ENCODE measurements at regions of chr15 and their contacts with region 1.

Region 1: DNA sequence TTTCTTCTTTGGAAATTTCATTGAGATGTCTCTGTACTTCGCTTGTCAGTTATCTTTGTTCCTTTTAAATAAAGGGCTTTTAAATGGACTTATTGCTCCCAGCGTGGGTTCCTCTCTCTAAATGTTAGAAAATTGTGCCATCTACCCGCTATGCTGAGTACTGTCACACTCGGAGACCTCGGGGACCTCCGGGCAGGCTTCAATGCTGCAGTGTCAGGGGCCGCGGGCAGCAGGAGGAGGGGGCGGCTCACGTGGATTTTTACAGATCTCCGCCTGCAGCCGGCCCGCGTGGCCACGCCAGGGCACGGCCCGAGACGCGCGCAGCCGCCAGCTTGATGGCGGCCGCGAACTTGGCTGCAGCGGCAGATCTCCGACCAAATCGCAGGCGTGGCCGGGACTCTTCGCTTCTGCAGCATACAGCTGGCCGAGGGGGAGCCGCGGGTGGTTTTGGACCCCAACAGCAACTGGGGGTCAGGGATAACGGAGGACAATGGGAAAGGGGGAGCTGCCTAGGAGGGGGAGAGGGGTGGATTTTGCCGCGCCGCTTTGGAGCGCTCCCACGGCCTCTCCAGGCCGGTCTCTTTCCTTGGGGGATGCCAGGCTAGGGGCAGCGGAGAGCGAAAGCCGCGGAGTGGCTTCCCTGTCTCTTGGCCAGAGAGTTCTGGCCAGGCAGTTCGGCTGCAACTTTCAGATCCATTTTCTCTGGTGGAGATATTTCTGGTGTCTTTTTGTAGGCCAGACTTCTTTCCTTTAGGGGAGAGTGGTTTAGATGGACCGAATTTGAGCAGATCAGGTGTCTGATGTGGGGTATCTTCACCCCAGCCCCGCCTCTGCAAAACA is 15.3 kb downstream of the NR2F2 start:
- DNase-seq: no peak
- H3K4me3 ChIP-seq: peak overlapping the region; percentile 30 to 47 (median 33)
- H3K27ac ChIP-seq: no peak overlapping the region
- H3K4me1 ChIP-seq: no peaks in the 10 kb centered on the region
- H3K27me3 ChIP-seq: no peaks in the 10 kb centered on the region
- CTCF ChIP-seq: peak; percentile 48 to 66

Region 2: DNA sequence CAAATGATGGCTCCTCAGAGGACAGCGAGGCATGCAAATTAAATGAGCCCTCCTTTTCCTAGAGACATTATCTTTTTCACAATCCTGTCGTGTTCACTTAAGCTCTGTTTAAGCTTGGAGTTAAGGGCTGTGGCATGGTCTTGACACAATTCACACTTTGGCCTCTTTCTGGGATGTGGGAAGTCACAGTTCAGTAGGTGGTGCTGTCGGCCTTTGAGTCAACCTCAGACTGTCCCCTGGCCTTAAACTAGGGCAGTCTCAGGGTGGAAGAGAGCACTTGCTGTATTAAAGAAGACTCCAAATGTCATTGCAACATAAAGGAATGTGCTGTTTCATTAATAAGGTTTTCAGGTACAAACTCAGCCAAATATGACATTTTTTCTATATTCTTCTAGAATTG is 1763.4 kb before region 1 on chr15:
- CTCF ChIA-PET with region 1: no interaction called
- dilution Hi-C with region 1: no loop called
- in situ Hi-C with region 1: no loop called
- intact Hi-C with region 1: loop called (anchors 5 kb)
- DNase-seq: peak; percentile 6
- H3K4me3 ChIP-seq: no peak overlapping the region
- H3K27ac ChIP-seq: no peak overlapping the region
- H3K4me1 ChIP-seq: no peaks in the 10 kb centered on the region
- H3K27me3 ChIP-seq: peaks cover 3% of the 10 kb centered on the region
- CTCF ChIP-seq: peak; percentile 37 to 49

Region 3: GRCh38 chr15:95760501-95760900 is 585.3 kb before region 1 on chr15:
- CTCF ChIA-PET with region 1: no interaction called
- dilution Hi-C with region 1: no loop called
- in situ Hi-C with region 1: no loop called
- intact Hi-C with region 1: loop called (anchors 1 kb)
- DNase-seq: no peak
- H3K4me3 ChIP-seq: no peak overlapping the region
- H3K27ac ChIP-seq: no peak overlapping the region
- H3K4me1 ChIP-seq: no peaks in the 10 kb centered on the region
- H3K27me3 ChIP-seq: no peaks in the 10 kb centered on the region
- CTCF ChIP-seq: no peak

Region 4: DNA sequence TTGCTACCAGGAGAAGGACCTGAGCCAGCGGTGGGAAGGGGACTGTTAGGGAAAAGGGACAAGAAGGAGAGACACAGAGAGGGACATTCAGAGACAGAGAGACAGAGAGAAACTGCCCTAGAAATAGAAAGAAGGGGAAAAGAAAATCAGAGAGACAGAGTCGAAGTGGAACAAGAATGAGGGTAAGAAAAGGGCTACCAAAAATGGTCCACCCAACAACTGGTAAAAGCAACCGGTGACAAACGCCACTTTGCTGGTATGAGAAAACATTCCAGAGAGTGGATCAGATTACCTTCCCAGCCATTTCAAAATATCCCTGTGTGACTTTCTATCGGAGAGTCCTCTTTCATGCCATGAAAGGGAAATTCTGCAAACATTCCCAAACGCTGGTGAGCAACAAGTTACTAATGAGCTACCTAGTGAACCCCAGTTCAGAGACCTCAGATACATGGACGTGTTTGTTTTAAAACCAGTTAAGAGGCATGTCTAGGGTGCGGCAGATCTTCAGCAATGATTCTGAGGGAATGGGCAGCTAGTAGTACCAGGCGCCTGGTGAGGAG is 433.6 kb before region 1 on chr15:
- CTCF ChIA-PET with region 1: no interaction called
- dilution Hi-C with region 1: no loop called
- in situ Hi-C with region 1: no loop called
- intact Hi-C with region 1: no loop called
- DNase-seq: no peak
- H3K4me3 ChIP-seq: no peak overlapping the region
- H3K27ac ChIP-seq: no peak overlapping the region
- H3K4me1 ChIP-seq: no peaks in the 10 kb centered on the region
- H3K27me3 ChIP-seq: peaks cover 3% of the 10 kb centered on the region
- CTCF ChIP-seq: no peak

Region 5: DNA sequence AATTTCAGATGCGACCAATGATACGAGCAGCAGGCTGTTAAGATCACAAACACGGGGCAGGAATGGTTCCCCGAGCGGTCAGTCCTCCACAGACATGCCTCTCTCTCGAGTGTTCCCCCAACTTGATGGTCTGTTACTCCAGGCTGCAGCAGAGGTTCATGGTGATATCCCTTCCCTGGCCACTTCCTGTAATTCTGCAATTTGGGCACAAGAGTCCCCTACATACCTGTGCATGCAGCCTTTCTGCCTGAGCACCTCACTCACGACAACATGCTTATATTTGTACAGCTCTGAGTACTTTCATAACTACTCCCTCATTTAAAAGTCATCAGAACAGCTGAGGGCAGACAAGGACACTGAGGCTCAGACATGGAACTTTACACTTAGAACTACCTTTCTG is 423.3 kb before region 1 on chr15:
- CTCF ChIA-PET with region 1: no interaction called
- dilution Hi-C with region 1: no loop called
- in situ Hi-C with region 1: no loop called
- intact Hi-C with region 1: loop called (anchors 1 kb)
- DNase-seq: peak; percentile 31
- H3K4me3 ChIP-seq: no peak overlapping the region
- H3K27ac ChIP-seq: no peak overlapping the region
- H3K4me1 ChIP-seq: no peaks in the 10 kb centered on the region
- H3K27me3 ChIP-seq: no peaks in the 10 kb centered on the region
- CTCF ChIP-seq: peak in 1 of 2 donors; percentile 39